Activated naive CD4-positive, alpha-beta T cell treated with anti-CD3 and anti-CD28 coated beads for 36 hours (primary cell): ENCODE measurements at regions of chr17 and their contacts with region 1.

Region 1: GRCh38 chr17:76182016-76182764 is 41.1 kb upstream of the FOXJ1 start:
- DNase-seq: peak; percentile 99
- H3K4me3 Mint-ChIP-seq: peak overlapping the region; percentile 63
- H3K27ac Mint-ChIP-seq: peak overlapping the region; percentile 94
- H3K4me1 Mint-ChIP-seq: peaks cover 74% of the 10 kb centered on the region
- H3K27me3 Mint-ChIP-seq: no peaks in the 10 kb centered on the region

Region 2: DNA sequence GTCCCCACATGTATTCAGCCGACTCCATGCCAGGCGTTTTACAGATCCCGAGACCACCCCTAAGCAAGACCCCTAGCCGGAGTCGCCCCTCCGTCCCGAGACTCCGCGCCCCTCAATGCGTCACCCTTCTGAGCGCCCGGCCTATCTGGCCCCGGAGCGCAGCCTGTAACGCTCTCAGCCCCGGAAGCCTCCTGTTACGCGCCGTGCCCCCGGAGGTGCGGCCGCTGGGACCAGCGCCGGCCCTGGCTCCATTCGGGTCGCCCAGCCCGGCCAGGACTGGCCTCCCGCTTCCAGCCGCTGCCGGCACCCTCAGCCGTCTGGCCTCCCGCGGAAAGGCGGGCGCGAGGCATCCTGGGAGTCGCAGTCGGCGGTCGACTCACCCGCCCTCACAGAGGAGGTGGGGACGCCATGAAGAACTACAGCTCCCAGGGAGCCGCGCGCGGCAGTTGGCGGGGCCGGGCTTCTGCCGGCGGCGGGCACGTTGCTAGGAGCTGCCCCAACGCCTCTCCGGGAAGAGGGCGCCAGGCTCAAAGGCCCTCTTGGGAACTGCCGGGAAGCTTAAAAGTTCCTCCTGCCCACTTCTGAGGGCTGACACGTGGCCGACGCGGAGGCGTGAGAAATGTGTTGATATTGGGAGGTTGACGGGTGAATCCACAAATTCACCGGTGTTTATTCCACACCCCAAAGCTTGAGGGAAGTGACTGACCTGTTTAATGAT is 241.3 kb before region 1 on chr17 and contains the start of gene FBF1:
- CTCF ChIA-PET with region 1: no interaction called
- intact Hi-C with region 1: no loop called
- DNase-seq: peak; percentile 92
- H3K4me3 Mint-ChIP-seq: peak within 1 kb of the TSS; percentile 88
- H3K27ac Mint-ChIP-seq: peak within 1 kb of the TSS; percentile 76
- H3K4me1 Mint-ChIP-seq: peaks cover 11% of the 10 kb centered on the region
- H3K27me3 Mint-ChIP-seq: no peaks in the 10 kb centered on the region
- total RNA-seq, gene FBF1: 20.7 to 21.0 TPM

Region 3: GRCh38 chr17:76121932-76122430 is 60.2 kb before region 1 on chr17:
- CTCF ChIA-PET with region 1: interaction called, 94 read pairs
- intact Hi-C with region 1: loop called (anchors 1 kb)
- DNase-seq: peak; percentile 39
- H3K4me3 Mint-ChIP-seq: peak overlapping the region; percentile 21
- H3K27ac Mint-ChIP-seq: peak overlapping the region; percentile 80
- H3K4me1 Mint-ChIP-seq: peaks cover 19% of the 10 kb centered on the region
- H3K27me3 Mint-ChIP-seq: no peaks in the 10 kb centered on the region

Region 4: GRCh38 chr17:76141212-76142038 is 40.8 kb before region 1 on chr17 and contains the start of gene FOXJ1:
- CTCF ChIA-PET with region 1: interaction called, 28 read pairs
- intact Hi-C with region 1: loop called (anchors 1 kb)
- DNase-seq: peak; percentile 92
- H3K4me3 Mint-ChIP-seq: peak within 1 kb of the TSS; percentile 72
- H3K27ac Mint-ChIP-seq: no peak within 1 kb of the TSS
- H3K4me1 Mint-ChIP-seq: peaks cover 58% of the 10 kb centered on the region
- H3K27me3 Mint-ChIP-seq: peaks cover 2% of the 10 kb centered on the region
- total RNA-seq, gene FOXJ1: 0.60 to 0.84 TPM

Region 5: DNA sequence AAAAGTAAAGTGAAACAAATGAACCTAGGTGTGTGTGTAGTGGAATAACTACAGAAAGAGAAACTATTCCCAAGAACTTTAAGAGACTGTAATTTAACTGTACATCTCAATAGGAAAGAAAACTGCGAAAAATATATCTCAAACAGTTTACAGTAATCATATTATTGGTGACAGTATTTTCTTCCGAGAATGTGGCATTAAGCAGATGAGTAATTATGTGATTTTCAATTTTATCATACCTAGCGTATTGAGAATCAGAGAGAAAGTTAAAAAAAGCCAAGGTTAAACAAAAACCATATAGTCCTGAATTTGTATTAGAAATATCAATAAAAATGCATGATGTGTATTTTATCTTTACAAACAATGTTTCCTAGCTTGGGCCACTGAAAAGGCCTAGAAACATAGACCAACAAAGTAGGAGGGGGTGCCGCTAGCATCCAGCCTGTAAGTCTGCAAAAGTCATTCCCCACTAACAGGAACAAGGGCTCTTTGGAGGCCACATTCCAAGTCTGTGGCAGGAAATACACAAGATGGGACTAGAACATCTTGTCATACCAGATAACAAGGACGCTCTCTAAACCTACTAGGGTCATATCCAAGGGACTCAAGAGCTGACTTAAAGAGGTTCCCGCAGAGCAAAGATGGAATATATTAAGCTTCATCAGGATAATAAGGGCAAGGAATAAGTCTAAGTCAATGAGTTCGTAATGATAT is 37.6 kb after region 1 on chr17:
- CTCF ChIA-PET with region 1: interaction called, 6 read pairs
- intact Hi-C with region 1: loop called (anchors 1 kb)
- DNase-seq: no peak
- H3K4me3 Mint-ChIP-seq: peak overlapping the region; percentile 24
- H3K27ac Mint-ChIP-seq: peak overlapping the region; percentile 44
- H3K4me1 Mint-ChIP-seq: peaks cover 58% of the 10 kb centered on the region
- H3K27me3 Mint-ChIP-seq: no peaks in the 10 kb centered on the region

Region 6: GRCh38 chr17:76271669-76272540 is 89.7 kb after region 1 on chr17:
- CTCF ChIA-PET with region 1: interaction called, 15 read pairs
- intact Hi-C with region 1: loop called (anchors 1 kb)
- DNase-seq: peak; percentile 97
- H3K4me3 Mint-ChIP-seq: peak overlapping the region; percentile 79
- H3K27ac Mint-ChIP-seq: peak overlapping the region; percentile 91
- H3K4me1 Mint-ChIP-seq: peaks cover 67% of the 10 kb centered on the region
- H3K27me3 Mint-ChIP-seq: no peaks in the 10 kb centered on the region

Region 7: GRCh38 chr17:76278952-76279741 is 97.0 kb after region 1 on chr17:
- CTCF ChIA-PET with region 1: interaction called, 91 read pairs
- intact Hi-C with region 1: loop called (anchors 1 kb)
- DNase-seq: peak; percentile 91
- H3K4me3 Mint-ChIP-seq: no peak overlapping the region
- H3K27ac Mint-ChIP-seq: no peak overlapping the region
- H3K4me1 Mint-ChIP-seq: peaks cover 28% of the 10 kb centered on the region
- H3K27me3 Mint-ChIP-seq: no peaks in the 10 kb centered on the region